WTC11 (cell line): ENCODE measurements at regions of chr2 and their contacts with region 1.

Region 1: GRCh38 chr2:61538200-61538919 is at the start of gene XPO1:
- DNase-seq: peak; percentile 100
- ATAC-seq: peak; percentile 85
- H3K4me3 Mint-ChIP-seq: peak within 1 kb of the TSS; percentile 99
- H3K27ac Mint-ChIP-seq: peak within 1 kb of the TSS; percentile 100
- H3K4me1 Mint-ChIP-seq: peaks cover 40% of the 10 kb centered on the region
- H3K27me3 Mint-ChIP-seq: no peaks in the 10 kb centered on the region; the same call in 1 of the 2 replicates
- CTCF ChIP-seq: no peak
- total RNA-seq, gene XPO1: 258 to 272 TPM (median 260 TPM) in 3 replicates

Region 2: GRCh38 chr2:61326423-61326822 is 211.9 kb before region 1 on chr2:
- CTCF ChIA-PET with region 1: no interaction called
- POLR2A ChIA-PET with region 1: no interaction called
- DNase-seq: no peak
- ATAC-seq: peak; percentile 52
- H3K4me3 Mint-ChIP-seq: no peak overlapping the region
- H3K27ac Mint-ChIP-seq: no peak overlapping the region
- H3K4me1 Mint-ChIP-seq: peaks cover 12% of the 10 kb centered on the region
- H3K27me3 Mint-ChIP-seq: no peaks in the 10 kb centered on the region
- CTCF ChIP-seq: no peak

Region 3: DNA sequence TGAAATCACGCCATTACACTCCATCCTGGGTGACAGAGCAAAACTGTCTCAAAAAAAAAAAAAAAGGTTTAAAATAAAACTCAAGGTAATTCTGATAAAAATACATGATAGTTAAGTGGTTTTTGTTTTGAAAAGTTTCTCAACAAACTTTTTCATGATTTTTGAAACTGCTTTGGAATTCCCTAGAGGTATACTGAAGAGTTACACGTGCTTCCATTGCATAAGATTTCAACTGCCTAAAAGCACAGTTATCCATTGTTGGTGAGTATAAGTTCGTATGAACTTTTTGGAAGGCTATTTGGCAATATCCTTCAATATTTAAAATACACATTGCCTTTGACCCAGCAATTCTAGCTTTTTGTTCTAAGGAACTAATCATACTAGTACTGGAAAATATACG is 142.4 kb before region 1 on chr2:
- CTCF ChIA-PET with region 1: no interaction called
- POLR2A ChIA-PET with region 1: interaction called, 10 read pairs
- DNase-seq: no peak
- ATAC-seq: no peak
- H3K4me3 Mint-ChIP-seq: no peak overlapping the region
- H3K27ac Mint-ChIP-seq: no peak overlapping the region
- H3K4me1 Mint-ChIP-seq: peaks cover 8% of the 10 kb centered on the region
- H3K27me3 Mint-ChIP-seq: no peaks in the 10 kb centered on the region
- CTCF ChIP-seq: no peak

Region 4: GRCh38 chr2:61549546-61549945 is 11.2 kb after region 1 on chr2:
- CTCF ChIA-PET with region 1: no interaction called
- POLR2A ChIA-PET with region 1: interaction called, 10 read pairs
- DNase-seq: no peak
- ATAC-seq: no peak; the same call in 1 of the 2 replicates
- H3K4me3 Mint-ChIP-seq: no peak overlapping the region
- H3K27ac Mint-ChIP-seq: no peak overlapping the region
- H3K4me1 Mint-ChIP-seq: peaks cover 23% of the 10 kb centered on the region
- H3K27me3 Mint-ChIP-seq: no peaks in the 10 kb centered on the region
- CTCF ChIP-seq: no peak

Region 5: DNA sequence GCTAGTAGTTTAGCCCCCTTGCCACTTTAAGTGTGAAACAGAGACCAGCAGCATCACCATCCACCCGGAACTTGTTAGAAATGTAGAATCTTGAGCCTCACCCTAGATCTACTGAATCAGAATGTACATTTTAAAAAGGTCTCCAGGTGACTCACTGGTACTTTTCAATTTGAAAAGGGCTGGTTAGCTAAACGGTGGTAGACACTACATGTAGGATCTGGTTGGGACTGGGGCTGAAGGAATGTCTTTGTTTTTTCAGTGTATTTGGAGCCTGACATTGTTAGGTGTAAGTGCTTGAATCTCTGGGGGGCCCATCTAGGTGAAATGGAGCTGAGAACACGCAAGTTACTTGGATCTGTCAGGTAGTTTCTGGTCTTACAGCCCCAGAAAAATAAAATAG is 43.8 kb after region 1 on chr2:
- CTCF ChIA-PET with region 1: interaction called, 3 read pairs
- POLR2A ChIA-PET with region 1: interaction called, 16 read pairs
- DNase-seq: no peak
- ATAC-seq: peak; percentile 94
- H3K4me3 Mint-ChIP-seq: peak overlapping the region; percentile 19
- H3K27ac Mint-ChIP-seq: peak overlapping the region; percentile 98
- H3K4me1 Mint-ChIP-seq: peaks cover 24% of the 10 kb centered on the region
- H3K27me3 Mint-ChIP-seq: no peaks in the 10 kb centered on the region
- CTCF ChIP-seq: no peak